ENCODE measurements at regions of chr3 and their contacts with region 1.

Region 1: DNA sequence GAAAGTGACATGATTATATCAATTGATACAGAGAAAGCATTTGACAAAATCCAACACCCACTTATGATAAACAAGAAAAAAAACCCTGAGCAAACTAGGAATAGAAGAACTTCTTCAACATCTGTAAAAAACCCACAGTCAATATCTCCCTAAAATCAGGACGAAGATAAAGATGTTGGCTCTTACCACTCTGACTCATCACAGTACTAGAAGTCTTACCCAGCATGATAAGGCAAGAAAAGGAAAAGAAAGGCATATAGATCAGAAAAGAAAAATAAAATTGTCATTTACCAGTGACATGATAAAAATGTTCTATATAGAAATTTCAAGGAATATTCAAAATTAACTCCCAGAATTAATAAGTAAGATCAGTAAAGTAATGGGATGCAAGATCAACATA is 7.2 kb upstream of the FBXW12 start:
- DNase-seq: no peak
- ATAC-seq: no peak

Region 2: DNA sequence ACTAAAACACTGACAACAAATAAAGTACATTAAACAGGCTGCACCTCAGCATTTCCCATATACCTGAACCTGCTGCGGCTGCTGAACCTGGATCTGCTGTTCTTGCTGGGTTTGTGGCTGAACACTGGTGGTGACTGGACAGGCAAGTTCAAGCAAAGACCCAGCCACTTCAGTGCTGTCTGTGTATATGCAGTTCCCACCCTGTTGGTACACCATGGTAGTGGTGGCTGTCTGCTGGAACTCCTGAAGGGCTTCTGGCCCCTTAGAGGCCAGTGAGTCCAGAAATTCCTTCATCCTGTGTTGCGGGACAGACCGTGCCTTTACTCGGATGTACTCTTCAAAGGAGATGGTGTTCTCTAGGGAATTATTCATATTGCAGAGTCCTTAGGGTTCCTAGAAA is 711.8 kb after region 1 on chr3:
- intact Hi-C with region 1: loop called (anchors 5 kb)
- DNase-seq: no peak
- ATAC-seq: no peak